Activated CD4-positive, alpha-beta memory T cell treated with anti-CD3 and anti-CD28 coated beads for 36 hours (primary cell): ENCODE measurements at regions of chr2 and their contacts with region 1.

Region 1: GRCh38 chr2:32010670-32011484 is at the start of gene MEMO1:
- DNase-seq: peak; percentile 96
- H3K4me3 Mint-ChIP-seq: peak within 1 kb of the TSS; percentile 86
- H3K27ac Mint-ChIP-seq: peak within 1 kb of the TSS; percentile 95
- H3K4me1 Mint-ChIP-seq: peaks cover 34% of the 10 kb centered on the region
- H3K27me3 Mint-ChIP-seq: no peaks in the 10 kb centered on the region
- total RNA-seq, gene MEMO1: 44.7 to 47.6 TPM

Region 2: GRCh38 chr2:31957354-31958139 is 53.3 kb before region 1 on chr2:
- CTCF ChIA-PET with region 1: interaction called, 3 read pairs
- POLR2A ChIA-PET with region 1: no interaction called
- intact Hi-C with region 1: loop called (anchors 5 kb)
- DNase-seq: no peak
- H3K4me3 Mint-ChIP-seq: no peak overlapping the region
- H3K27ac Mint-ChIP-seq: peak overlapping the region; percentile 18
- H3K4me1 Mint-ChIP-seq: peaks cover 58% of the 10 kb centered on the region
- H3K27me3 Mint-ChIP-seq: no peaks in the 10 kb centered on the region

Region 3: GRCh38 chr2:32039447-32040219 is 28.8 kb after region 1 on chr2 and contains the start of gene DPY30:
- CTCF ChIA-PET with region 1: no interaction called
- POLR2A ChIA-PET with region 1: interaction called, 11 read pairs
- intact Hi-C with region 1: loop called (anchors 1 kb)
- DNase-seq: peak; percentile 94
- H3K4me3 Mint-ChIP-seq: peak within 1 kb of the TSS; percentile 81
- H3K27ac Mint-ChIP-seq: peak within 1 kb of the TSS; percentile 88
- H3K4me1 Mint-ChIP-seq: peaks cover 12% of the 10 kb centered on the region
- H3K27me3 Mint-ChIP-seq: no peaks in the 10 kb centered on the region
- total RNA-seq, gene DPY30: 81.6 to 89.2 TPM